Left ventricle myocardium superior (tissue), 1 donor: ENCODE measurements at regions of chr3 and their contacts with region 1.

Region 1: GRCh38 chr3:189967254-189967865 is 153.3 kb downstream of the P3H2 start:
- DNase-seq: no peak
- ATAC-seq: no peak

Region 2: DNA sequence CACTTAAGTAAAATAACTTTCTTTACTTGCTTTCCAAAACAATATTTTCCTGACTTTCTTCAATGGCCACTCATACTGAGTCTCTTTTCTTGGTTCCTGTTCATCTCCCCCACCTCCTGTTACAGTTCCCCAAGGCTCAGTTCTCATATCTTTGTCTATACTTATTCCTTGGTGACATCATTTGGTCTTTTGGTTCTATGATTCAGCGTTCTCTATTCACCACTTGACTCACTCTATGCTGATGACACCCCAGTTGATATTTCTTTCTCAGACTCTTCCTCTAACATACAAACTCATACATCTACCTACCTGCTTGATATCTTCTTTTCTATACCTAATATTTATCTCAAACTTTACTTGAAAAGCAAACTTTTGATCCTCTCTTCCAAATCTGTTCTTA is 238.4 kb after region 1 on chr3:
- intact Hi-C with region 1: loop called (anchors 1 kb)
- DNase-seq: no peak
- ATAC-seq: no peak

Region 3: GRCh38 chr3:190326930-190327329 is 359.6 kb after region 1 on chr3:
- intact Hi-C with region 1: loop called (anchors 5 kb)
- DNase-seq: no peak
- ATAC-seq: peak; percentile 75